Activated CD4-positive, alpha-beta T cell treated with anti-CD3 and anti-CD28 coated beads, Interleukin-2, amount 10 ng/mL, durations not matched to agents 24 days and 14 days (primary cell): ENCODE measurements at regions of chr19 and their contacts with region 1.

Region 1: GRCh38 chr19:10259162-10259905 is 7.3 kb downstream of the MRPL4 start:
- DNase-seq: peak; percentile 97
- H3K4me3 Mint-ChIP-seq: peak overlapping the region; percentile 70
- H3K27ac Mint-ChIP-seq: peak overlapping the region; percentile 94
- H3K4me1 Mint-ChIP-seq: peaks cover 28% of the 10 kb centered on the region
- H3K27me3 Mint-ChIP-seq: no peaks in the 10 kb centered on the region

Region 2: GRCh38 chr19:10245189-10245939 is 14.0 kb before region 1 on chr19:
- intact Hi-C with region 1: no loop called
- DNase-seq: no peak
- H3K4me3 Mint-ChIP-seq: no peak overlapping the region
- H3K27ac Mint-ChIP-seq: no peak overlapping the region
- H3K4me1 Mint-ChIP-seq: peaks cover 3% of the 10 kb centered on the region
- H3K27me3 Mint-ChIP-seq: no peaks in the 10 kb centered on the region

Region 3: DNA sequence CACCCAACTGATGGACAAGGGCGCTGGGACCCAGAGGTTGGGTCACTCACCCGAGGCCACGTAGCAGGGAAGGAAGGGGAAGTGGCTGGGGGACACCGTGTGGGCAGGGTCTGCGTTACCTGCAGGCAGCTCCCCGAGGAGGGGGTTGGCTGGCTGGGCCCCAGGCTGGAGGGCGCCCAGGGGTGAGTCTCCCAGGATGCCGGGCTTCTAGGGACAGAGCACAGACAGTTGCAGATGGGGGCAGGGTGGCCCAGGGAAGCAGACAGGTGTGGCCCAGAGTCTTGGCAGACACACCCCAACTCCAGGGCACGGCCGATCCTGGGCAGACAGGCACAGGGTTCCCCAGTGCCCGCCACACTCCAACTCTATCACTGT is 62.1 kb after region 1 on chr19:
- intact Hi-C with region 1: no loop called
- DNase-seq: no peak
- H3K4me3 Mint-ChIP-seq: no peak overlapping the region
- H3K27ac Mint-ChIP-seq: no peak overlapping the region
- H3K4me1 Mint-ChIP-seq: peaks cover under 1% of the 10 kb centered on the region
- H3K27me3 Mint-ChIP-seq: no peaks in the 10 kb centered on the region

Region 4: DNA sequence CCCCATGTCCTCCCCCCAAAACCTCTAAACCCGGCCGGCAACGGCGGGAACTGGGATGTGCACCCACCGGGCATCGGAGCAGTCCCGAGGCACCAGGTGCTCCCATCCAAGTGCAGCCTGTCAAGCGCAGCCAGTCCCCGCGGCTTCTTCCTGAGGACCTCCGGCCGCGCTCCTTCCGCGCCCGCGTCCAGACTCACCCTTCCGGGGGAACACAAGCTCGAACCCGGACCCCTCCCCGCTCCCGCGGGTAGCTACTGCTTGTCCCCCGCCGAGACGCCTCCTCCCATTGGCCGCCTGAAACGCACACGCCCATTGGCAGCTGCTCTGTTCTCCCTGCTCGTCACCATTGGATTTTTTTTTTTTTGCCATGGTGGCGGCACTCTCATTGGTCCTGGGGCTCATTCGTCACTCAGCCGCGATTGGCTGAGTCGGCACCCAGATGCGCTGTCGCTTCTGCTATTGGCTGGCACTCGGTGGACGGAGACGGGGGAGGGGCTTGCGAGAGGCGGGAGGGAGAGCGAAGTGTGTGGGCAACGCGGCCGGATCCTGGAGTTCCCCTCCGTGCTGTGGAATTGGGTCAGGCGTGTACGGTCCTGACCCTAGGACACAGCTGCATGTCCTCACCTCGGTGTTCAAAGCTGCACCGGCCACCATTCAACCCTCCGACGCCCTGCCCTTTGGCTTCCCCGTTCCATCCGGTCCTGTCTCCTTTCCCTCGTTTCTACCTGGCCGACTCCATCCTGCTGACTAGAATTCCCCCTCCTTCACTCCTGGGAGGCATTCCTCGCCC is 121.2 kb after region 1 on chr19 and contains the start of gene TYK2:
- intact Hi-C with region 1: loop called (anchors 2 kb)
- DNase-seq: peak; percentile 99
- H3K4me3 Mint-ChIP-seq: peak within 1 kb of the TSS; percentile 92
- H3K27ac Mint-ChIP-seq: peak within 1 kb of the TSS; percentile 91
- H3K4me1 Mint-ChIP-seq: peaks cover 20% of the 10 kb centered on the region
- H3K27me3 Mint-ChIP-seq: peaks cover 1% of the 10 kb centered on the region
- total RNA-seq, gene TYK2: 244 and 255 TPM in 2 replicates

Region 5: GRCh38 chr19:10388957-10389356 is 129.6 kb after region 1 on chr19:
- intact Hi-C with region 1: loop called (anchors 1 kb)
- DNase-seq: peak; percentile 93
- H3K4me3 Mint-ChIP-seq: no peak overlapping the region
- H3K27ac Mint-ChIP-seq: no peak overlapping the region
- H3K4me1 Mint-ChIP-seq: peaks cover 9% of the 10 kb centered on the region
- H3K27me3 Mint-ChIP-seq: no peaks in the 10 kb centered on the region